ENCODE measurements at regions of chr6 and their contacts with region 1.

Region 1: DNA sequence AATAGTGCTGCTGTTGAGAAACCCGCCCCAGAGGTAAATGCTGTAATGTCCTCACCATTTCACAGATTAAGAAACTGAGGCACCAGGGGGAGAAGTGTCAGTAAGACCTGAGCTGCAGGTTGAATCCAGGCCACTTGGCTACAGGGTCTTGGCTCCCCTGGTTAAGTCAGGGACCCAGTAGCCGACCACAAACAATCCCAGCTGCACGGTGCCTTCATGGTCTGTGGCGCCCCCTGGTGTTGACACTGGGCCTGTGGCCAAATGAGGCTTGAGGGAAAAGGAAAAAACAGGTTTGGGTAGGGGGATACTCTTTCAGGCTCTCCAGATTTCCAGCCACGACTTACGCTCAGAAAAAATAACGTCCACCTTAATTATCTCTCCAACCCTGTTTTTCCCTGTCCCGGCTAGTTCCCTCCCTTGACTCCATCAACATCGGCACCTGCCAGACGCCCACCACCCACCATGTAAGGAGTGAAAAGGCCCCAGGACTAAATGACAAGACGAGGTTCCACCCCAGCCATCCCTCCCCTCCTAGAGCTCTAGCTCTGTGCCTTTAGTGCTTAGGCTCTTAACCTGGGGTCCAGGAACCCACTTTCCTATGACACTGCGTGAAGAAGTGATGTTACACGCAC is 47.7 kb upstream of the POLR1H start:
- DNase-seq: no peak
- H3K4me3 ChIP-seq: no peak overlapping the region
- H3K27ac ChIP-seq: no peak overlapping the region
- H3K4me1 ChIP-seq: no peaks in the 10 kb centered on the region
- H3K27me3 ChIP-seq: peaks cover 0 to 17% of the 10 kb centered on the region in 2 donors
- CTCF ChIP-seq: peak; percentile 45 to 87

Region 2: DNA sequence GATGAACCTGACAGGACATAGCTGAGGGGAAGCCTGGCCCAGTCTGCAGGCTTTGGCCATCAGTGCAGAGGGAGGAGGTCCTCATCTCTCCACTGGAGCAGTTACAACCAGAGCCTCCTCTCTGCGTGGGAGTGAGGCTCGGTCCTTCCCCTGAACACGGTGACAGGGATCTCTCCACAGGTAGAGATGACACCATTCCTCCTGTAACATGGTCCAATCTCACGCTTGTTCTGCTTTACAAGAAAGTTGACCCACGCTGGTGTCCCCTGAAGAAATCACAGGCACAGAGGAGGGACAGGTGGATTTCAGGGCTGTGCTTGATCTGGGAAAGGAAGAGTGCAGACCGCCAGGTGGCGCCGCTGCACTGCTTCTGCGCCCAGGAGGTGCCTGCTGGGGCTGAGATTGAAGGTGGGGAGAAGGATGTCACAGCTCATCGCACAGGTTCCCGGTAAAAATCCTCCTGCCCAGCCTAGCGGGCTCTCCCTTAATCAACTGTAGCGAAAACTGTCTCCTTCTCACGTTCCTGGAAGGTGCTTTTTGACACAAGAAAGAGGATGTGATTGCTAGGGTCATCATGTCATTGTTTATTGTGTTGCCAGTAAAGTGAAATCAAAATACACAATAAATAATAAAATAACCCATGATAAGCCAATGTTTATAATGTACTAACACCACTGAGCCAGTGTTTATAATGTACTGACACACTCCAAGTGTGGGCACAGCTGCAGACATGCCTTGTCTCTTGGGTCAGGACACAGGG is 165.4 kb before region 1 on chr6:
- intact Hi-C with region 1: loop called (anchors 2 kb)
- DNase-seq: peak; percentile 69 to 80
- H3K4me3 ChIP-seq: no peak overlapping the region
- H3K27ac ChIP-seq: no peak overlapping the region
- H3K4me1 ChIP-seq: peaks cover 0 to 7% (median 5%) of the 10 kb centered on the region in 4 donors
- H3K27me3 ChIP-seq: peaks cover 6 to 57% of the 10 kb centered on the region in 2 donors
- CTCF ChIP-seq: peak; percentile 92 to 96